Activated CD4-positive, alpha-beta memory T cell treated with anti-CD3 and anti-CD28 coated beads, Interleukin-2, amount 10 ng/mL, durations not matched to agents 7 days and 5 days (primary cell): ENCODE measurements at regions of chr12 and their contacts with region 1.

Region 1: DNA sequence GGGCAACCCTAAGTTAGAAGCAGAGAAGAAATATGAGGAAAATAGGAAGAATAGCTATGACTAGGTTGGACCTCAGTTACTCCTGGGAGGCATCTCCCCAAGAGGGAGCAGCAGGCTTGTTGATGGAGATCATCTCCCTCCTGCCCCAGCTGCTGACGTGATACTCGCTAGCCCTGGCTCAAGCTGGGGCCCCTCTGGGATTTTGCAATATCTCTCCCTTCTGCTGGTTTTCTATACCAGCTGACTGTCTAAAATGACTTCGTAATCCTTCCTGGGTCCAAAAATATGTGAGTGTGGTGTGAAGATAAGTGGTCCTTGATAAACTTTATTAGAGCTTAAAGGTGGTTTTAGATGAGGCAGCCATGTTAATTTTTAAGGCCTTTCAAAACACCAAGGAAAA is 4.5 kb upstream of the HECTD4 start:
- DNase-seq: no peak
- H3K4me3 Mint-ChIP-seq: no peak overlapping the region
- H3K27ac Mint-ChIP-seq: no peak overlapping the region
- H3K4me1 Mint-ChIP-seq: peaks cover 17% of the 10 kb centered on the region
- H3K27me3 Mint-ChIP-seq: peaks cover 10% of the 10 kb centered on the region

Region 2: GRCh38 chr12:111942557-111942956 is 444.2 kb before region 1 on chr12:
- CTCF ChIA-PET with region 1: interaction called, 12 read pairs
- POLR2A ChIA-PET with region 1: no interaction called
- DNase-seq: no peak
- H3K4me3 Mint-ChIP-seq: no peak overlapping the region
- H3K27ac Mint-ChIP-seq: no peak overlapping the region
- H3K4me1 Mint-ChIP-seq: peaks cover 18% of the 10 kb centered on the region
- H3K27me3 Mint-ChIP-seq: no peaks in the 10 kb centered on the region

Region 3: DNA sequence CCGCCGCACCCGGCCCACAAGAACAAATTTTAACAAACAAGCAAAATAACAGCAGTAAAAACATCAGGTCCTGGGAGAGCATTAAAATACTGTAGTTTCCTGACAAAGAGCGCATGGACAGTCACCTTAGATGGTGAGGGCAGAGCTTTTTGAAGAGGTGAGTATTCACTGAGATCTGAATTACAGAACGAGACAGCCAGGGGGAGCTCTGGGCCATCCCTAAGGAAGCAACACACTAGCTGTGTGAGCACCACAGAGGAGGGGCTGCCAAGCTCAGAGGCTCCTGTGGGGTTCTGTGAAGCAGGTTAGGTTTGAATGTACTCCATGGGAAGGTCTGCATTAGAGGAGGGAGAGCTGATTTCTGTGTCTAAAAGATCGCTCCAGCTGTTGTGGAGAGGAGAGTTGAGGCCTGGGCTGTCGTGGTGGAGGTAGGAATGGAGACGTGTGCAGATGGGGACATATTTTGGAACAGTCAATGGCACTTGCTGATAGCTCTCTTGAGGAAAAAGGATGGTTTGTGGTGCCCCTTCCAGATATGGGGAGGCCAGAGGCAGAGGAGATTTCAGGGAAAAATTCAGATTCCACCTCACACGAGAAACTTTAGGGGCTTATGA is 188.5 kb before region 1 on chr12:
- CTCF ChIA-PET with region 1: interaction called, 57 read pairs
- POLR2A ChIA-PET with region 1: interaction called, 3 read pairs
- DNase-seq: peak; percentile 57
- H3K4me3 Mint-ChIP-seq: no peak overlapping the region
- H3K27ac Mint-ChIP-seq: no peak overlapping the region
- H3K4me1 Mint-ChIP-seq: peaks cover 2% of the 10 kb centered on the region
- H3K27me3 Mint-ChIP-seq: no peaks in the 10 kb centered on the region

Region 4: GRCh38 chr12:112219195-112219594 is 167.5 kb before region 1 on chr12:
- CTCF ChIA-PET with region 1: no interaction called
- POLR2A ChIA-PET with region 1: no interaction called
- DNase-seq: no peak
- H3K4me3 Mint-ChIP-seq: no peak overlapping the region
- H3K27ac Mint-ChIP-seq: no peak overlapping the region
- H3K4me1 Mint-ChIP-seq: no peaks in the 10 kb centered on the region
- H3K27me3 Mint-ChIP-seq: no peaks in the 10 kb centered on the region

Region 5: DNA sequence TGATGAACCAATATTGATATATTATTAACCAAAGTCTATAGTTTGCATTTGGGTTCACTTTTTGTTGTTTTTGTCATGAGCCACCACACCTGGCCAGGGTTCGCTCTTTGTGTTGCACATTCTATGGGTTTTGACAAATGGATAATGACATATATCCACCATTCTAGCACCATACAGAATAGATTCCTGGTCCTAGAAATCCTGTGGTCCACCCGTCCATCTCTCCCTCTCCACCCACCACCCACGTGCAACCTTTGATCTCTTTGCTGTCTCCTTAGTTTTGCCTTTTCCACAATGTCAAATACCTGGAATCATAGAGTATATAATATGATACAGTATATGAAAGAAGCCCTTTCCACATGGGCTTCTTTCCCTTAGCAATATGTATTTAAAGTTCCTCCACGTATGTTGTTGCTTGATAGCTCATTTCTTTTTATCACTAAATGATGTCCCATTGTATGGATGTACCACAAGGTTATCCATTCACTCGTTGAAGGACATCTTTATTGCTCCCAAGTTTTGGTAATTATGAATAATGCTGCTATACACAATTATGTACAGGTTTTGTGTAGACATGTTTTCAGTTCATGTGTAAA is 15.3 kb after region 1 on chr12:
- CTCF ChIA-PET with region 1: interaction called, 10 read pairs
- POLR2A ChIA-PET with region 1: no interaction called
- DNase-seq: no peak
- H3K4me3 Mint-ChIP-seq: no peak overlapping the region
- H3K27ac Mint-ChIP-seq: no peak overlapping the region
- H3K4me1 Mint-ChIP-seq: peaks cover 18% of the 10 kb centered on the region
- H3K27me3 Mint-ChIP-seq: no peaks in the 10 kb centered on the region

Region 6: DNA sequence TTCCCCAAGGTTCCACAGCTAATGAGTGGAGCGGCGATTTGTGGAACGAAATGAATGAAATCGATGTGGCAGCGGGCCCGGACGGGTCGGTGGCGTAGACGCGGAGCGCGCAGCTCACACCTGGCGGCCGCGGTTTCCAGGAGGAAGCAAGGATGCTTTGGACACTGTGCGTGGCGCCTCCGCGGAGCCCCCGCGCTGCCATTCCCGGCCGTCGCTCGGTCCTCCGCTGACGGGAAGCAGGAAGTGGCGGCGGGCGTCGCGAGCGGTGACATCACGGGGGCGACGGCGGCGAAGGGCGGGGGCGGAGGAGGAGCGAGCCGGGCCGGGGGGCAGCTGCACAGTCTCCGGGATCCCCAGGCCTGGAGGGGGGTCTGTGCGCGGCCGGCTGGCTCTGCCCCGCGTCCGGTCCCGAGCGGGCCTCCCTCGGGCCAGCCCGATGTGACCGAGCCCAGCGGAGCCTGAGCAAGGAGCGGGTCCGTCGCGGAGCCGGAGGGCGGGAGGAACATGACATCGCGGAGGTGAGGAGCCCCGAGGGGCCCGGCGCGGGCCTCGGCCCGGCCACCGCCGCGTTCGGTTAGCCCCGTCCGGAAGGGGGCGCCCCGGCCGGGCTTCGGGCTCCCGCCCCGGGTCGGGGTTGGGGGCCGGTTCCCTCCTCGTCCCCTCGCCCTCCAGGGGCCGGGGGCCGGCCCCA is 32.0 kb after region 1 on chr12 and contains the start of gene PTPN11:
- CTCF ChIA-PET with region 1: no interaction called
- POLR2A ChIA-PET with region 1: interaction called, 10 read pairs
- DNase-seq: peak; percentile 90
- H3K4me3 Mint-ChIP-seq: peak within 1 kb of the TSS; percentile 86
- H3K27ac Mint-ChIP-seq: peak within 1 kb of the TSS; percentile 89
- H3K4me1 Mint-ChIP-seq: peaks cover 41% of the 10 kb centered on the region
- H3K27me3 Mint-ChIP-seq: peaks cover 2% of the 10 kb centered on the region
- total RNA-seq, gene PTPN11: 88.1 to 92.3 TPM